Posterior vena cava (tissue), 2 donors: ENCODE measurements at regions of chr18 and their contacts with region 1.

Region 1: DNA sequence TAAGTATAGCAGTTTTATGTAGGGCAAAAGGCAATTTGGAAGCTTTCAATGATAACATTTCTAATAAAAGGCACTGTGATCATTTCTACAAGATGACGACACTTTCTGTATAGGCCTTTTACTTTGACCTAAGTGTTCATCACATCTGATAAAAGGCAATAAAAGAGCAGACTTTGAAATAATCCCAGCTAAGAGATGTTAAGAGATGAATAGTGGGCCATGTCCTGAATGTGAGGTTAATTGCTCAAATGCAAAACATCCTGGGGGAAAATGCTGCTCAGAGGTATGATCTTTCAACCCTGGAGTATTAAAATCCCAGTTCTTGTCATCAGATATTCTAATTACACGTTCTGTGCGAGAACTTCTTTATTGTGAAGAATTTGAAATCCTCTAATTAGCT is 677.6 kb downstream of the SOCS6 start:
- DNase-seq: no peak

Region 2: GRCh38 chr18:70892381-70892780 is 74.0 kb before region 1 on chr18:
- intact Hi-C with region 1: loop called in 1 of 2 experiments (anchors 2 kb)
- DNase-seq: no peak